H1 (cell line): ENCODE measurements at regions of chr6 and their contacts with region 1.

Region 1: GRCh38 chr6:125858427-125859320 is 67.9 kb downstream of the NCOA7 start:
- DNase-seq: peak; percentile 68 to 69
- H3K4me3 ChIP-seq: no peak overlapping the region
- H3K27ac ChIP-seq: no peak overlapping the region
- H3K4me1 ChIP-seq: no peaks in the 10 kb centered on the region
- H3K27me3 ChIP-seq: no peaks in the 10 kb centered on the region
- CTCF ChIP-seq: peak; percentile 84 to 97 (median 90)
- EP300 ChIP-seq: no peak
- POLR2A ChIP-seq: no peak
- RAD21 ChIP-seq: peak; percentile 87 to 92

Region 2: DNA sequence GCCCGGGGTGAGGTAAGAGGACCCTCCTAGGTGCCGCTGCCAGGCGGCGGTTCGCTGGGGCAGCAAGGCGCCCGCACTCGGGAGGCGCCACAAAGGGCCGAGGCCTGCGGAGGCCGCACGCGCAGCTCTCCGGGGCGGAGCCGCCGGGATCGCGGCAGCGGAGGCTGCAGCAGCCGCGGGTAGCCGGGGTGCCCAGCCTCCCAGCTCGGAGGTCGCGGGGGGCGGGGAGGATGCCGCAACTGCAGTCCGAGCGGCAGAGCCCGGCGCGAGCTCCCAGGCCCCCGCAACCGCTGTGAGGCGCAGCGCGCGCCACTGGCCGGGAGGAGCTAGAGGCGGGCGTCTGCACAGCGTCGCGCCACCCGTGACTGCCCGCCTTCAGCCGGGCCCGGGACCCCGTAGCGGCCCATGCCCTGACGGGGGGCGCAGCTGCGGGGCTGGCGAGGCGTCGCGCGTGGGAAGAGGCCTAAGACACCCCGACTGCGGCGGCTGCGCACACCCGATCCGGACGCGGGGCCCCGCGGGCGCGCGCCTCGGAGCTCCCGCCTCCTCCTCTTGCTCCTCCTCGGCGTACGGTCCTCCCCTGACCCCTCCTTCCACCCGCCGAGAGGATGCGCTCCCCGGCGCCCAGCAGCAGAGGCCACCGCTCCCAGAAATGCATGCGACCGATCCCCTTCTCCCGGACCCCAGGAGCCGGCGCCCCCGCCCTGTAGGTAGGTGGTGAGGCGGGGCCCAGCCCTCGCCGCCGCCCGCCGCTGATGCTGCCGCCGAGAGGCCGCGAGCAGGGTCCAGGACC is 68.1 kb before region 1 on chr6 and contains the start of gene NCOA7:
- CTCF ChIA-PET with region 1: interaction called, 18 read pairs
- POLR2A ChIA-PET with region 1: no interaction called
- DNase-seq: peak in 1 of 2 experiments; percentile 84
- H3K4me3 ChIP-seq: peak within 1 kb of the TSS; percentile 66 to 84 (median 74)
- H3K27ac ChIP-seq: peak within 1 kb of the TSS; percentile 49; the same call in 1 of the 2 replicates
- H3K4me1 ChIP-seq: peaks cover 2 to 10% (median 4%) of the 10 kb centered on the region in 4 experiments; a peak in 4 of 7 replicates
- H3K27me3 ChIP-seq: no peaks in the 10 kb centered on the region; a peak in 1 of 7 replicates
- CTCF ChIP-seq: no peak
- EP300 ChIP-seq: 0 out of 3 replicates have a peak, but pooled peaks of 1 of the 2 experiments have one; percentile 11
- POLR2A ChIP-seq: peak; percentile 53 to 77
- RAD21 ChIP-seq: no peak
- total RNA-seq, gene NCOA7: 10.3 and 10.7 TPM in 2 replicates

Region 3: DNA sequence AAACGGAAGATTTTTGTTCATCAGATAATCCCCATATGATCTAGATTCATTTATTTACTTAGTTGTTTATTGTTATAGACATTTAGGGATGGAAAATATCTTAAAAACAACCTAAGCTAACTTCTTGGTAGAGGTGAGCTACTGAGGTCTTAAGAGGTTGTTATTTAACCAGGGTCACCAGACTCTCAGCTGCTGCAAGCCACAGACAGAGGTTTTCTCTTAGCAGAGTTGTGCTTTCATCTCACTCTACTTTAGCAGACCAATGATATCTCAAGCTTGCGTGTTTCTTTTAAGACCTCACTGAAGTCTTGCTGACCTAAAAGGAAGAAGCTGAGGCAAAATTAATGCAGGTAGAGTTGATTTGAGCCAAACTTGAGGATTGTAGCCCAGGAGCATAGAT is 24.3 kb before region 1 on chr6:
- CTCF ChIA-PET with region 1: interaction called, 20 read pairs
- POLR2A ChIA-PET with region 1: no interaction called
- DNase-seq: no peak
- H3K4me3 ChIP-seq: no peak overlapping the region
- H3K27ac ChIP-seq: no peak overlapping the region
- H3K4me1 ChIP-seq: no peaks in the 10 kb centered on the region
- H3K27me3 ChIP-seq: no peaks in the 10 kb centered on the region
- CTCF ChIP-seq: no peak
- EP300 ChIP-seq: no peak
- POLR2A ChIP-seq: no peak
- RAD21 ChIP-seq: no peak

Region 4: GRCh38 chr6:125844989-125845388 is 13.7 kb before region 1 on chr6:
- CTCF ChIA-PET with region 1: interaction called, 11 read pairs
- POLR2A ChIA-PET with region 1: interaction called, 5 read pairs
- DNase-seq: no peak
- H3K4me3 ChIP-seq: no peak overlapping the region
- H3K27ac ChIP-seq: no peak overlapping the region
- H3K4me1 ChIP-seq: no peaks in the 10 kb centered on the region
- H3K27me3 ChIP-seq: no peaks in the 10 kb centered on the region
- CTCF ChIP-seq: no peak
- EP300 ChIP-seq: no peak
- POLR2A ChIP-seq: no peak
- RAD21 ChIP-seq: no peak

Region 5: GRCh38 chr6:125906158-125906998 is 47.7 kb after region 1 on chr6:
- CTCF ChIA-PET with region 1: interaction called, 11 read pairs
- POLR2A ChIA-PET with region 1: no interaction called
- DNase-seq: peak in 1 of 2 experiments; percentile 85
- H3K4me3 ChIP-seq: no peak overlapping the region
- H3K27ac ChIP-seq: no peak overlapping the region
- H3K4me1 ChIP-seq: no peaks in the 10 kb centered on the region; a peak in 1 of 7 replicates
- H3K27me3 ChIP-seq: no peaks in the 10 kb centered on the region
- CTCF ChIP-seq: peak; percentile 78 to 93 (median 86)
- EP300 ChIP-seq: no peak
- POLR2A ChIP-seq: no peak
- RAD21 ChIP-seq: peak; percentile 52 to 60